Activated T-helper 1 cell treated with anti-CD3 and anti-CD28 coated beads, Interleukin-12 subunit alpha, Interleukin-12 subunit beta, Interleukin-2, Interleukin-4 antibody, amounts not matched to agents 30 ng/mL and 10 ng/mL and 1 ng/mL, durations not matched to agents 14 hours and 24 hours and 36 hours (primary cell): ENCODE measurements at regions of chr18 and their contacts with region 1.

Region 1: GRCh38 chr18:30712383-30712782 is 330.2 kb downstream of the DSC3 start:
- DNase-seq: no peak
- H3K4me3 Mint-ChIP-seq: no peak overlapping the region
- H3K27ac Mint-ChIP-seq: no peak overlapping the region
- H3K4me1 Mint-ChIP-seq: no peaks in the 10 kb centered on the region
- H3K27me3 Mint-ChIP-seq: no peaks in the 10 kb centered on the region

Region 2: GRCh38 chr18:30766053-30766452 is 53.7 kb after region 1 on chr18:
- intact Hi-C with region 1: loop called (anchors 5 kb)
- DNase-seq: no peak
- H3K4me3 Mint-ChIP-seq: no peak overlapping the region
- H3K27ac Mint-ChIP-seq: no peak overlapping the region
- H3K4me1 Mint-ChIP-seq: no peaks in the 10 kb centered on the region
- H3K27me3 Mint-ChIP-seq: no peaks in the 10 kb centered on the region